Dendritic cell treated with granulocyte-macrophage colony-stimulating factor and Interleukin-4, amounts not matched to agents 40 ng/mL and 50 ng/mL, for 4 days (primary cell): ENCODE measurements at regions of chr6 and their contacts with region 1.

Region 1: GRCh38 chr6:42260972-42261371 is 43.3 kb upstream of the MRPS10 start:
- H3K4me3 Mint-ChIP-seq: no peak overlapping the region
- H3K27ac Mint-ChIP-seq: no peak overlapping the region
- H3K4me1 Mint-ChIP-seq: peaks cover 11% of the 10 kb centered on the region
- H3K27me3 Mint-ChIP-seq: no peaks in the 10 kb centered on the region

Region 2: DNA sequence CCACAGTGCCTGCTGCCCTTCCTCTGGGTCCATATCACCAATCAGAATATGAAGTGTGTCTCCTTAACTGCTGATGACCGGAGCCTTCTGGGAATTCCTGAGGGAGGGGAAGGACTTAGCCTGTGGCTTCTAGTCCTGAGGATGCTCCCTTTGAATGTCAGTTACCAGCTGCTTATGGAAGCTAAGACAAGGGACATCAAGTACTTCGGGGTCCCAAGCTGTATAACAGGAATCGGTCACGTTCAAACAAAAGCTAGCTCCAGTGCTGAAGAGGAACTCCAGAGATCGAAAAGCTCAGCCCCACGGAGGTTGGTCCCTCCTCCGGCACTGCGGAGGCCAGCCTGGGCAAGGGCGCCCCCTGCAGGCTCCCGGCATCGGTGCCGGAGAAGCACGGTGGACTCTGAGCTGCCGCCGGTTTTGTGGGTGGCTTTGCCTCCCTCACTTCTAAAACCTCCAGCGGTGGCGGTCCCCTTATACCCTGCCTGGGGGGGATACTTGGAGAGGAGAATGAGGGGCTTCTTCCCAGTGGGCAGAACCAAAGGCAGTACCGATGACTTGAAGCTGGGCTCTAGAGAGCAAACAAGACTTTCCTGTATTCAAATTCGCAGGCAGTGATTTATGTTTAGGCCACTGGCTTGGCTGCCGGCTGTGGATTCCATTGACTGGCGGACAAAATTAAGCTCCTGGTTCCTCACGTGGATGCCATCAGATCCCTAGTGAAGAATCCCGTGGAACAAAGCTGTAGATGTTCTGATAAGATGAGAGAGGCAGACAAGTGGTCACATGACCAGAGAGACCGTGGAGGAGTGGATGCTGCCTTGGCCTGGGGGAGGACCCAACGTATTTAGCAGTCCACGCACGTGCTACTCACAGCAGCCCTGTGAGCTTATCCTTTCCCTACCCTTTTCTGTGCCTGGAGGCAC is 286.7 kb after region 1 on chr6:
- intact Hi-C with region 1: loop called (anchors 5 kb)
- H3K4me3 Mint-ChIP-seq: peak overlapping the region; percentile 74
- H3K27ac Mint-ChIP-seq: peak overlapping the region; percentile 76
- H3K4me1 Mint-ChIP-seq: peaks cover 14% of the 10 kb centered on the region
- H3K27me3 Mint-ChIP-seq: peaks cover 8% of the 10 kb centered on the region

Region 3: DNA sequence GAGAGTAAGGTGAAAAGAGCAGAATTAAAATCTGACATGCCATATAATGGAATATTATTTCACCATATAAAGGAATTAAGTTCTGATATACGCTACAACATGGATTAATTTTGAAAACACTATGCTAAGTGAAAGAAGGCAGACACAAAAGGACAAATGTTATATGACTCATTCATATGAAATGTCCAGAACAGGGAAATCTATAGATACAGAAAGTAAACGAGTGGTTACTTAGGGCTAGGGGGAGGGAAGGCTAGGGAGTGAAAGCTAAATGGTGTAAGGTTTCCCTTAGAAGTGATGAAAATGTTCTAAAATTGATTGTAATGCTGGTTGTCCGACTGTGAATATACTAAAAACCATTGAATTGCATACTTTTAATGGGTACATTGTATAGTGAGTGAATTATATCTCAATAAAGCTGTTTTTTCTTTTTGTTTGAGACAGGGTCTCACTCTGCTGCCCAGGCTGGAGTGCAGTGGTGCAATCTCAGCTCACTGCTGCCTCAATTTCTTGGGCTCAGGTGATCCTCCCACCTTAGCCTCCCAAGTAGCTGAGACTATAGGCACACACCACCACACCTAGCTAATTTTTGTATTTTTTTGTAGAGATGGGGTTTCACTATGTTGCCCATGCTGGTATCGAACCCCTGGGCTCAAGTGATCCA is 453.3 kb after region 1 on chr6:
- intact Hi-C with region 1: no loop called
- H3K4me3 Mint-ChIP-seq: no peak overlapping the region
- H3K27ac Mint-ChIP-seq: no peak overlapping the region
- H3K4me1 Mint-ChIP-seq: no peaks in the 10 kb centered on the region
- H3K27me3 Mint-ChIP-seq: peaks cover 3% of the 10 kb centered on the region